GM10248 (cell line): ENCODE measurements at regions of chr7 and their contacts with region 1.

Region 1: DNA sequence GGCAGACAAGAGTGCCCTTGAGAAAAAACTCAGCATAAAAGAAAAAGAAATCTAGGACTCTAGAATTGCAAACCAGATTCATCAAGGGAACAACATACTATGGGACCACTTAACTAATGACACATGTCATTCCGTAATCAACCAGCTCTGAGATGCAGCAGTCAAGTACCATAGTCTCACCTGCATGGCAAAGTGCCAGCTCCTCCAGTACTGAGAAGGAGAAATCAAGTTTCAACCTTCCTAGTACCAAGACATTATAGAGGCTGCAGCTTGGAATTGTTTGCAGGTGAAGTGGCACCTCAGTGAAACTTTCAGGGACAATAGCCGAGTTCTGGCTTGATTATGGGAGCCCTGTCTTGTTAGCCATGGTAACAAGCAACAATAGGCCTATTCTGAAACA is 11.5 kb downstream of the STEAP1 start:
- DNase-seq: no peak
- CTCF ChIP-seq: no peak

Region 2: DNA sequence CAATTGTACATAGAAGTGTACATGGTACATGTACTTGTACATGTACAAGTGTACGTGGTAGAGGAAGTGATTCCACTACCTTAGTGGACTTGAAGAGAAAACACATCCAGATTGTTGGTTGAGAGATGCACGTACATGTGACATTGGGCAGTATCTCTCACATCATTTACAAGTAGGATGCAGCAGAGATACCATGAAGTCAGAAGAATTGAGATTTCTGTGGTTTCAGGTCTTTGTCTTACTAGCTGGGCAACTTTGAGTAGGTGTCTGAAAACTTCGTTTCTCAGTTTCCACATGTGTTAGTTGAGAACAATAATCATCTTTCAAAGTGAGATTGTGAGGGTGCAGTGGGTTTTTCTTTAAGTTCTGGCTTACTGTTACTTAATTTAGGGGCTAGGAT is 259.0 kb after region 1 on chr7:
- CTCF ChIA-PET with region 1: interaction called, 12 read pairs
- POLR2A ChIA-PET with region 1: no interaction called
- DNase-seq: peak; percentile 36
- CTCF ChIP-seq: no peak